ENCODE measurements at regions of chr1 and their contacts with region 1.

Region 1: GRCh38 chr1:235093696-235094592 is 34.7 kb downstream of the TOMM20 start:
- DNase-seq: peak; percentile 73 to 80
- ATAC-seq: peak; percentile 62 to 88 (median 80)
- H3K4me3 ChIP-seq: peak overlapping the region in 9 of 10 donors; percentile 11 to 50 (median 33)
- H3K27ac ChIP-seq: peak overlapping the region in 5 of 10 donors; percentile 24 to 67 (median 36)
- H3K4me1 ChIP-seq: peaks cover 3 to 15% (median 12%) of the 10 kb centered on the region in 9 donors
- H3K27me3 ChIP-seq: no peaks in the 10 kb centered on the region
- CTCF ChIP-seq: peak; percentile 86 to 94 (median 89)

Region 2: DNA sequence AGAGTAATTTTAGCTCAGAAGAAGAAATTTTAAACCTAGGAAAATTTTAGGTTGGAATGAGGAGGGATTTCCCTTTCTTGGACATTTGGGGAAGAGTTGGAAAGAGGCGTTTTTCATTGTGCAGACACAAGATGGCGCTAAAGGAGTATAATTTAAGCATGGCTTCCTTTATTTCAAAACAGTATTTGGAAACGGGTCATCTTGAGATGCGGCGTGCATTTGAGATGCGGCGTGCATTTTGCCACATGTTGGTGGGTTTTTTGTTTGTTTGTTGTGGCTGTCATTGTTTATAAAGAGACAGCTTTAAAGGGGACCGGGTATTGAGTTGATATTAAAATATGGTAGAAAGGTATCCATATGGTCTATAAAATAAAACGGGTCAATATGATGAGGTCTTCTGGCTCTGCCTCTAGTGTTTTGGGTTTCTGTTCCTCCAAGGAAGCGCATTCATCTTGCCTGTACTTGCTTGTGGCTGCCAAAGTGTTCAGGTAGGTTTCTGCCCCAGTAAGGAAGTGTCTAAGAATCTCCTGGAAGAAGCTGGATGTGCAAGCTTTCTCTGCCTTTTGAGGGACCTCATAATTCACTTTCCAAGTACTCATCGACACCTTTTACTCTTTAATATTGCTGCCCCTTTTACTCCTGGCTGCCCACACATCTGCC is 979.2 kb before region 1 on chr1:
- intact Hi-C with region 1: loop called in 1 of 10 experiments (anchors 10 kb)
- DNase-seq: peak in 1 of 2 donors; percentile 26
- ATAC-seq: no peak
- H3K4me3 ChIP-seq: no peak overlapping the region
- H3K27ac ChIP-seq: no peak overlapping the region
- H3K4me1 ChIP-seq: no peaks in the 10 kb centered on the region
- H3K27me3 ChIP-seq: peaks cover 0 to 24% (median 3%) of the 10 kb centered on the region in 7 donors
- CTCF ChIP-seq: peak; percentile 27 to 78 (median 70)

Region 3: GRCh38 chr1:234486498-234487448 is 607.2 kb before region 1 on chr1:
- intact Hi-C with region 1: loop called in 8 of 10 experiments (anchors 2 to 5 kb)
- DNase-seq: peak in 1 of 2 donors; percentile 47
- ATAC-seq: peak; percentile 27 to 88 (median 76)
- H3K4me3 ChIP-seq: peak overlapping the region in 3 of 10 donors; percentile 4 to 18 (median 5)
- H3K27ac ChIP-seq: peak overlapping the region in 3 of 10 donors; percentile 1 to 33 (median 13)
- H3K4me1 ChIP-seq: peaks cover 3 to 17% (median 9%) of the 10 kb centered on the region in 9 donors
- H3K27me3 ChIP-seq: peaks cover 0 to 6% (median 0%) of the 10 kb centered on the region in 7 donors
- CTCF ChIP-seq: peak; percentile 37 to 85 (median 77)